Sigmoid colon (tissue), 7 donors: ENCODE measurements at regions of chr6 and their contacts with region 1.

Region 1: GRCh38 chr6:109440331-109441068 is at the starts of genes PPIL6 and SMPD2:
- DNase-seq: peak; percentile 95
- H3K4me3 ChIP-seq: peak within 1 kb of the TSS; percentile 83 to 89 (median 86)
- H3K27ac ChIP-seq: peak within 1 kb of the TSS; percentile 82 to 90 (median 84)
- H3K4me1 ChIP-seq: peaks cover 0 to 30% (median 22%) of the 10 kb centered on the region in 4 donors
- H3K27me3 ChIP-seq: no peaks in the 10 kb centered on the region
- CTCF ChIP-seq: peak in 1 of 4 experiments; percentile 34
- EP300 ChIP-seq: no peak
- POLR2A ChIP-seq: no peak
- total RNA-seq, gene PPIL6: 1.4 to 10.2 (median 4.3) TPM
- total RNA-seq, gene SMPD2: 2.4 to 18.3 (median 6.6) TPM

Region 2: DNA sequence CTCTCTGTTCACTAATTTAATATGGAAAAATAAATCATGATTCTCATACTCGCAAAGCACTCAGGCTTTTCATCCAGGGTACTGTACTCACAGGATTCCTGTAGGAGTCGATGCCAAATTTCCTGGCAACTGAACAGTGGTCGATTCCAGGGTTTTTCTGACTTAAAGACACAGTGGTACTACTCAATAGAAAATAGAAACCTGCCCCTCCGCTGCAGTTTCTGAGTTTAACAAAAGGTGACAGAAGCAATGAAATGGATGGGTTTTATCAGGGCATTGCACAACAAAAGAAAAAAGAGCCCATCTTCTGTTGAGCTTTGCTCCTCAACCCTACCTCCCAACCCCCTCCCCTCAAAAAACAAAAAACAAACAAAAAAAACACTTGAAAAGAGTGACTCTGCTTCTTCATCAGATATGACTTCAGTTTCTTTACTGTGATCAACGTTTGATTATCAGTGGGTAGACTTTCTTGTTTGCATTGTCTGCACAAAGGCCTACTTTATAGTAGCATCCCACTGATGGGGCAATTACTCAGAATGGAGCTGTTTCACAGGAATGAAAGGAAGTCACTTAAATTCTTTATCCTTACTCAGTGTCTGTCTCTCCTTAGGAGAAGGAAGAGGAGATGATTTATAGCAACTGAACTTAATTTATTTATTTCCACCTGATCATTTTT is 975.9 kb before region 1 on chr6:
- intact Hi-C with region 1: no loop called
- DNase-seq: no peak
- H3K4me3 ChIP-seq: no peak overlapping the region
- H3K27ac ChIP-seq: no peak overlapping the region
- H3K4me1 ChIP-seq: peaks cover 0 to 10% (median 3%) of the 10 kb centered on the region in 4 donors
- H3K27me3 ChIP-seq: no peaks in the 10 kb centered on the region
- CTCF ChIP-seq: no peak
- EP300 ChIP-seq: no peak
- POLR2A ChIP-seq: no peak

Region 3: GRCh38 chr6:109455502-109456282 is 15.2 kb after region 1 on chr6 and contains the start of gene MICAL1:
- intact Hi-C with region 1: loop called (anchors 2 kb)
- DNase-seq: peak; percentile 82
- H3K4me3 ChIP-seq: peak within 1 kb of the TSS; percentile 50 to 76 (median 70)
- H3K27ac ChIP-seq: peak within 1 kb of the TSS; percentile 50 to 77 (median 71)
- H3K4me1 ChIP-seq: peaks cover 0 to 32% (median 22%) of the 10 kb centered on the region in 4 donors
- H3K27me3 ChIP-seq: no peaks in the 10 kb centered on the region
- CTCF ChIP-seq: peak in 2 of 4 experiments; percentile 15 to 28
- EP300 ChIP-seq: no peak
- POLR2A ChIP-seq: peak in 1 of 2 donors; percentile 14
- total RNA-seq, gene MICAL1: 7.8 to 23.5 (median 10.7) TPM

Region 4: DNA sequence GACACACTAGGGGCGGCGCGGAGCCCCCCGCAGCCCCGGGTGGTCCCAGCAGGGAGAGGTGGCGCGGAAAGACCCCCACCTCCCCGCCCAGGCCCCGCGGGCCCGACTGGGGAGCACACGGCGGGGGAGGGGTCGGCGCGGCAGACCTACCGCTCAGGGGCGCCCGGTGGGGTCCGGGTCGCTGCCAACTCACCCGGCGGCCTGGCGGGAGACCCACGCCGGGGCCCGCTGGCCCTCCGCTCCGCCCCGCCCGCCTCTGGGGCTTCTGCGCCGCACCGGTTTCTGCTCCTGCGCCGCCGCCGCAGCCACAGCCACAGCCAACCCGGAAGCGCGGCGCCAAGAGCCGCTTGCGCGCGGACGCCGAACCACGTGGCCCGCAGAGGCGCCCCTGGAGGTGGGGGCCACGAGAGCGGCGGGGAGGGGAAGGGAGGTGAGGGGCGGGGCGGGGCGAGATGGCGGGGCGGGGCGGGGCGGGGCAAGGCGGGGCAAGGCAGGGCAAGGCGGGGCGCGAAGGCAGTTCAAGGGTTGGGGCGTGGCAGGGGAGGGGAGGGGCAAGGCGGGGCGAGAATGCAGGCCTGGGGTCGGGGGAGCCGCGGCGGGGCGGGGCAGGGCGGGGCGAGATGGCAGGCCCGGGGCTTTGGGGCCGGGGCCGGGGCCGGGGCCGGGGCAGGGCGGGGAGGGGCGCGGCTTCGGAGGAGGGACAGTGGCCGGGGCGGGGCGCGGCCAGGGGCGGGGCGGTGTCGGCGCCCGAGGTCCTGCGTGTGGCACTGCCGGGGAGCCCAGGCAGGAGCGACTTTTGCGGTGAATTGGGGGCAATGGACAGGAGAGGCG is 42.6 kb after region 1 on chr6 and contains the start of gene ZBTB24:
- intact Hi-C with region 1: loop called (anchors 1 kb)
- DNase-seq: peak; percentile 95
- H3K4me3 ChIP-seq: peak within 1 kb of the TSS; percentile 76 to 100 (median 88)
- H3K27ac ChIP-seq: peak within 1 kb of the TSS; percentile 77 to 90 (median 84)
- H3K4me1 ChIP-seq: peaks cover 3 to 44% (median 42%) of the 10 kb centered on the region in 4 donors
- H3K27me3 ChIP-seq: no peaks in the 10 kb centered on the region
- CTCF ChIP-seq: no peak
- EP300 ChIP-seq: no peak
- POLR2A ChIP-seq: no peak
- total RNA-seq, gene ZBTB24: 4.6 to 8.2 (median 6.3) TPM

Region 5: GRCh38 chr6:110628330-110628729 is 1187.8 kb after region 1 on chr6:
- intact Hi-C with region 1: no loop called
- DNase-seq: no peak
- H3K4me3 ChIP-seq: no peak overlapping the region
- H3K27ac ChIP-seq: no peak overlapping the region
- H3K4me1 ChIP-seq: no peaks in the 10 kb centered on the region
- H3K27me3 ChIP-seq: no peaks in the 10 kb centered on the region
- CTCF ChIP-seq: no peak
- EP300 ChIP-seq: no peak
- POLR2A ChIP-seq: no peak